ENCODE measurements at regions of chr11 and their contacts with region 1.

Region 1: GRCh38 chr11:111601979-111602864 is at the start of gene SIK2:
- DNase-seq: peak; percentile 99 to 100
- H3K4me3 ChIP-seq: peak within 1 kb of the TSS; percentile 87
- H3K4me3 Mint-ChIP-seq: peak within 1 kb of the TSS; percentile 97
- H3K27ac Mint-ChIP-seq: peak within 1 kb of the TSS; percentile 95
- H3K4me1 ChIP-seq: peaks cover 21% of the 10 kb centered on the region
- H3K4me1 Mint-ChIP-seq: peaks cover 29% of the 10 kb centered on the region
- H3K27me3 ChIP-seq: no peaks in the 10 kb centered on the region
- H3K27me3 Mint-ChIP-seq: peaks cover 5% of the 10 kb centered on the region
- CTCF ChIP-seq: peak; percentile 97 to 100
- total RNA-seq, gene SIK2: 37.3 and 40.2 TPM in 2 replicates

Region 2: DNA sequence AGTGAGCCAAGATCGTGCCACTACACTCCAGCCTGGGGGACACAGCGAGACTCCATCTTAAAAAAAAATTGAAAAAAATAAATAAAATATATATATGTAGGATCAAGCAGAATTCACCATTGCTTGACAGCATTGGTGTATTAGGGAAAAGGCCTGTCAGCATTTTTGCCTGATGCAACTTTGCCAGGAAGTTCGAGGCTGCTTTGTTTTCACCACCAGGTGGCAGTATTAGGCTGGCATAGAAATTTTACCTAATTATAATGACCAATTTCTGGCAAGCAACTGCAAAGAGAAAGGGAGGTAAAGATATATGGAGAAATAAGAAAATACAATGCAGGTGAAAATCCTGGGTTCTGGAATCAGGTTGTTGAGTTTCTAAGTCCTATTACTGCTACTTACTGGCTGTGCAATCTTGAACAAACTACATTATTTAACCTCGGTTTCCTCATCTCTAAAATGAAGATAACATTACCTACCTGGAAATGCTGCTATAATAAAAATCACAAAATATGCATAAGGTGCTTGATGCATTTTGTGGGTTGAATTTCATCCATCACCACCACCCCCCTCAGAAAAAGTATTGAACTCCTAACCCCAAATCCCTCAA is 37.0 kb before region 1 on chr11:
- CTCF ChIA-PET with region 1: no interaction called
- POLR2A ChIA-PET with region 1: no interaction called
- intact Hi-C with region 1: loop called (anchors 1 kb)
- DNase-seq: peak; percentile 73 to 86
- H3K4me3 ChIP-seq: no peak overlapping the region
- H3K4me3 Mint-ChIP-seq: no peak overlapping the region
- H3K27ac Mint-ChIP-seq: no peak overlapping the region
- H3K4me1 ChIP-seq: no peaks in the 10 kb centered on the region
- H3K4me1 Mint-ChIP-seq: peaks cover 7% of the 10 kb centered on the region
- H3K27me3 ChIP-seq: no peaks in the 10 kb centered on the region
- H3K27me3 Mint-ChIP-seq: no peaks in the 10 kb centered on the region
- CTCF ChIP-seq: peak; percentile 93 to 98

Region 3: GRCh38 chr11:111665777-111666176 is 63.6 kb after region 1 on chr11:
- CTCF ChIA-PET with region 1: interaction called, 4 read pairs
- POLR2A ChIA-PET with region 1: no interaction called
- intact Hi-C with region 1: loop called (anchors 5 kb)
- DNase-seq: peak; percentile 69 to 81
- H3K4me3 ChIP-seq: no peak overlapping the region
- H3K4me3 Mint-ChIP-seq: no peak overlapping the region
- H3K27ac Mint-ChIP-seq: no peak overlapping the region
- H3K4me1 ChIP-seq: no peaks in the 10 kb centered on the region
- H3K4me1 Mint-ChIP-seq: peaks cover 12% of the 10 kb centered on the region
- H3K27me3 ChIP-seq: no peaks in the 10 kb centered on the region
- H3K27me3 Mint-ChIP-seq: no peaks in the 10 kb centered on the region
- CTCF ChIP-seq: no peak

Region 4: DNA sequence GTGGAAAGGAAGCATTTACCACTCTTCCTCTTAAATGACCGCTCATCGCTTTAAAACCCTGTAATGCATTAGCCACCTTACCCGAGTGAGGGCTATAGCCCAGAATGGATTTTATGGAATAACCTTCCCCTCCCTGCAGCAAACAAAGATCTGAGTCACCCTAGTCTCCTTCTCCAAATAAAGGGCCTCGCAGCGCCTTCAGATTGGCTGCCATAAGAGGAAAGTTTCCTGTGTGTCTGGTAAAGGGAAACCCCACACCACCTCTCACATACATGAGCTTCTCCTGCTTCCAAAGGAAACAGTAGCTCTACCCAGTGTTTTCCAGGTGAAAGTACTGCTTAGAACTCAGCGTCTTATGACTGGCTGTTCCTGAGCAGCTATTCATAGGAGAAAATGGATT is 116.2 kb after region 1 on chr11:
- CTCF ChIA-PET with region 1: interaction called, 3 read pairs
- POLR2A ChIA-PET with region 1: interaction called, 3 read pairs
- intact Hi-C with region 1: loop called (anchors 1 kb)
- DNase-seq: peak in 1 of 2 experiments; percentile 41
- H3K4me3 ChIP-seq: no peak overlapping the region
- H3K4me3 Mint-ChIP-seq: no peak overlapping the region
- H3K27ac Mint-ChIP-seq: peak overlapping the region; percentile 14
- H3K4me1 ChIP-seq: peaks cover 5% of the 10 kb centered on the region; the same call in 1 of the 2 replicates
- H3K4me1 Mint-ChIP-seq: peaks cover 15% of the 10 kb centered on the region
- H3K27me3 ChIP-seq: no peaks in the 10 kb centered on the region
- H3K27me3 Mint-ChIP-seq: no peaks in the 10 kb centered on the region
- CTCF ChIP-seq: no peak

Region 5: DNA sequence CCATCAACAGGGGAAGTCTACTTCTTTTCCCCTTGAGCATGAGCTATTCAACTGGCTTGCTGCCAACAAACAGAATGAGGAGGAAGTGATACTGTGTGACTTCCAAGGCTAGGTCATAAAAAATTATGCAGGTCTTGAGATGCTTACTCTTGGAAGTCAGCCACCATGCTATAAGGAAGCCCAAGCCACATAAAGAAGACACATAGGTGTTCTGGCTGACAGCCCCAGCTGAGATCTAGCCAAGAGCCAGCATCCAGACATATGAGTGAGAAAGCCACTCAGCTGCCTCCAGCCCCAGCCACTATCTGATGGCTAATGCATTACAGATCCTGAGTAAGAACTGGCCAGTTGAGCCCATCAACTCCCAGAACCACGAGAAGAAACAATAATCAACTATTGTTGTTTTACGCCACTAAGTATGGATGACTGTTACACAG is 194.9 kb after region 1 on chr11:
- CTCF ChIA-PET with region 1: interaction called, 5 read pairs
- POLR2A ChIA-PET with region 1: no interaction called
- intact Hi-C with region 1: loop called (anchors 1 kb)
- DNase-seq: no peak
- H3K4me3 ChIP-seq: no peak overlapping the region
- H3K4me3 Mint-ChIP-seq: no peak overlapping the region
- H3K27ac Mint-ChIP-seq: no peak overlapping the region
- H3K4me1 ChIP-seq: peaks cover 20% of the 10 kb centered on the region
- H3K4me1 Mint-ChIP-seq: peaks cover 21% of the 10 kb centered on the region
- H3K27me3 ChIP-seq: no peaks in the 10 kb centered on the region
- H3K27me3 Mint-ChIP-seq: no peaks in the 10 kb centered on the region
- CTCF ChIP-seq: no peak

Region 6: DNA sequence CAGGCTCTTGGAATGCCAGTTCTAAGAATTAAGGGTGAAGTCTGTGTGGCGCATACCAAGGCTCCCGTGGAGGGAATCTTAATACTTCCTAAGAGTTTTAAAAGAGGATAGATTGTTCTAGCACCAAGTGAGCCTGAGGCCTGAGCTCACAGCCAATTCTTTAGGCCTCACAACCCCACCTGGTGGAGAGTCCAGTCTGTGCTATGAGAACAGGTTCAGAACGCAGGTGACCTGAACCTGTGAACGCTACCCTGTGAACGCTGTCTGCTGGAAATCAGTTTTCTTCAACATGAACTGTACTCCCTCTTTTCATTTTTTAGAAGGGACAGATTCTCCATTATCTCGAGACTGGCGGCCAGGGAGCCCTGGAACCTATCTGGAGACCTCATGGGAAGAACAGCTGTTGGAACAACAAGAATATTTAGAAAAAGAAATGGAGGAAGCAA is 379.8 kb after region 1 on chr11:
- CTCF ChIA-PET with region 1: no interaction called
- POLR2A ChIA-PET with region 1: no interaction called
- intact Hi-C with region 1: loop called (anchors 5 kb)
- DNase-seq: peak; percentile 88 to 91
- H3K4me3 ChIP-seq: no peak overlapping the region
- H3K4me3 Mint-ChIP-seq: peak overlapping the region; percentile 53
- H3K27ac Mint-ChIP-seq: peak overlapping the region; percentile 52
- H3K4me1 ChIP-seq: peaks cover 29% of the 10 kb centered on the region
- H3K4me1 Mint-ChIP-seq: peaks cover 30% of the 10 kb centered on the region
- H3K27me3 ChIP-seq: no peaks in the 10 kb centered on the region
- H3K27me3 Mint-ChIP-seq: no peaks in the 10 kb centered on the region
- CTCF ChIP-seq: peak; percentile 95 to 99

Measured in Caco-2 (cell line).